ENCODE measurements at regions of chr3 and their contacts with region 1.

Region 1: DNA sequence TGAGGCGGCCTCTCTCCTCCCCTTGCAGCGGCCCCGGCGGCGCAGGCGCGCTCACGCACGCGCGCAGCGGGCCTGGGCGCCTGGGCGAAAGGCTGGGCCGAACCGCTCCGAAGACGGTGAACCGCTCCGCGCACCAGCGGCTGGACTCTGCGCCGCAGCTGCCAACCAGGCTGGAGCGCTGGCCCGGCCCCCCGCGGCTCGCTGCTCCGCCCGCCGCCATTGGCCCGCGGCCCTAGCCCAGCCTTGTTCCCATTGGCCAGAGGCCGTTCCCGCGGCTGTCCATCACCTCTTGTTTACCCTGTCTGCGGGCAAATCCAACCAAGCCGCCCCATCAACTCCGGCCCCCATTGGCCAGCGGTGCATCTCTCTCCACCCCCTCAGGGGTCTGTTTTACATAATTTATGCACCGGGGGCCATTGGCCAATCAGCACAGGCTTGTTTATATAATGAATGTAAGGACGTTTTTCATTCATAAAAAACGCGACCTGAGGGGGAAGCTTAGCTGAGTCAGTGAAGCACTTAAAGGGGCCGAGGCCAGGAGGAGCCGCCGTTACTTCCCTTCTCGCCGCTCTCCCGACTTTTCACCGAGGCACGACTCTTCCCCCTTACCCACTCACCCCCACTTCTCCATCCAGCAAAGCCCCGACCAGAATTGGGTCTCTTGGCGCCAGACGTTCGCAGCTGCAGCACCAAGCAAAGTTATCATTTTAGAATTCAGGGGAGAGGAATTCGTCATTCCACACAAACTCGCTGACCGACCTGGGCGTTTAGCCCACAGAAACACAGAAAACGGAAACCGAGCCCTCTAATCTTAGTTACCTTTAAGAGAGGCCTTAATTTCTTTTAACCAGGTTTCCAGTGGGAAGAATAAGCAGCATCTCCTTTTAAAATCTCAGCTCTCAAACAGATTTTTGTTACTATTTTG is at the start of gene ETV5:
- DNase-seq: peak; percentile 97
- H3K4me3 Mint-ChIP-seq: peak within 1 kb of the TSS; percentile 78
- H3K27ac Mint-ChIP-seq: no peak within 1 kb of the TSS
- H3K4me1 Mint-ChIP-seq: peaks cover 30% of the 10 kb centered on the region
- H3K27me3 Mint-ChIP-seq: peaks cover 79% of the 10 kb centered on the region
- total RNA-seq, gene ETV5: 1.1 to 1.5 TPM

Region 2: GRCh38 chr3:185585859-185586685 is 523.1 kb before region 1 on chr3 and contains the start of gene SENP2:
- CTCF ChIA-PET with region 1: no interaction called
- intact Hi-C with region 1: loop called (anchors 2 kb)
- DNase-seq: peak; percentile 100
- H3K4me3 Mint-ChIP-seq: peak within 1 kb of the TSS; percentile 83
- H3K27ac Mint-ChIP-seq: peak within 1 kb of the TSS; percentile 88
- H3K4me1 Mint-ChIP-seq: peaks cover 27% of the 10 kb centered on the region
- H3K27me3 Mint-ChIP-seq: no peaks in the 10 kb centered on the region
- total RNA-seq, gene SENP2: 19.4 to 25.0 TPM

Region 3: GRCh38 chr3:185976977-185977678 is 132.1 kb before region 1 on chr3:
- CTCF ChIA-PET with region 1: interaction called, 4 read pairs
- intact Hi-C with region 1: loop called (anchors 5 kb)
- DNase-seq: peak; percentile 94
- H3K4me3 Mint-ChIP-seq: no peak overlapping the region
- H3K27ac Mint-ChIP-seq: no peak overlapping the region
- H3K4me1 Mint-ChIP-seq: peaks cover 9% of the 10 kb centered on the region
- H3K27me3 Mint-ChIP-seq: no peaks in the 10 kb centered on the region

Region 4: DNA sequence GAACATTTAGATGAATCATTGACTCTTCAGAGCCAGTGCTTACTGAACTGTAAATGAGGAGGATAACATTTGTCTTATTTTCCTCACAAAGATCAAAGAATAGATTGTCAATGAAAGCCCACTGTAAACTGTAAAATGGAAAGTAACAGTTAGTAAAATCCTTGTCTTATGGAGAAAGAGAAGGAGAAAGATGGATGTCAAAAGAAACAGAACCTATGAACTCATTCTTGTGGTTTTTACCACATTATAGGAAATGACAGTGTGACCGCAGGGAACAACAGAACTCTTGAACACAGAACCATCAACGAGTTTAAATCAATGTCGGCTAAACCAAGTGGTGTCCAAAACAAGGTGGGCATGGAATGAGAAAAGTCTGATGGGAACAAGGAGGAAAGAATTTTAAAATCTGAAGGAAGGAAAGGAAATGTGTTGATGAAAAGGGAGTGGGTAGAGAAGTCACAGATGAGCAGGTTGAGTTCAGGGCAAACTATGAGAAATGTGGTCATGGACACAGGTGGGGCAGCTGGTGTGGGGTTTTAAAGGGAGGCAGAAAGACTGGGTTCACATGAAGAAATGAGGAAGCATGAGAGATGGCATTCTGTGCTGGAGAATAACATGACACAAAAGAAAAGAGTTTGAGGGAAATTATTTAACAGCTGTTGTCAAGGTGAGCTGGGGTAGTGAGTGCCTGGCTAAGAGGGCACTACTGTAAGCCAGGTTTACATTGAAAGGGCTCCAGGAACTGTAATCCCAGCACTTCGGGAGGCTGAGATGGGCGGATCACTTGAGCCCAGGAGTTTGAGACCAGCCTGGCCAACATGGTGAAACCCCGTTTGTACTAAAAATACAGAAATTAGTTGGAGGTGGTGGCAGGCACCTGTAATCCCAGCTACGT is 42.1 kb after region 1 on chr3:
- CTCF ChIA-PET with region 1: no interaction called
- intact Hi-C with region 1: loop called (anchors 1 kb)
- DNase-seq: peak; percentile 10
- H3K4me3 Mint-ChIP-seq: no peak overlapping the region
- H3K27ac Mint-ChIP-seq: peak overlapping the region; percentile 18
- H3K4me1 Mint-ChIP-seq: peaks cover 13% of the 10 kb centered on the region
- H3K27me3 Mint-ChIP-seq: peaks cover 48% of the 10 kb centered on the region

Region 5: DNA sequence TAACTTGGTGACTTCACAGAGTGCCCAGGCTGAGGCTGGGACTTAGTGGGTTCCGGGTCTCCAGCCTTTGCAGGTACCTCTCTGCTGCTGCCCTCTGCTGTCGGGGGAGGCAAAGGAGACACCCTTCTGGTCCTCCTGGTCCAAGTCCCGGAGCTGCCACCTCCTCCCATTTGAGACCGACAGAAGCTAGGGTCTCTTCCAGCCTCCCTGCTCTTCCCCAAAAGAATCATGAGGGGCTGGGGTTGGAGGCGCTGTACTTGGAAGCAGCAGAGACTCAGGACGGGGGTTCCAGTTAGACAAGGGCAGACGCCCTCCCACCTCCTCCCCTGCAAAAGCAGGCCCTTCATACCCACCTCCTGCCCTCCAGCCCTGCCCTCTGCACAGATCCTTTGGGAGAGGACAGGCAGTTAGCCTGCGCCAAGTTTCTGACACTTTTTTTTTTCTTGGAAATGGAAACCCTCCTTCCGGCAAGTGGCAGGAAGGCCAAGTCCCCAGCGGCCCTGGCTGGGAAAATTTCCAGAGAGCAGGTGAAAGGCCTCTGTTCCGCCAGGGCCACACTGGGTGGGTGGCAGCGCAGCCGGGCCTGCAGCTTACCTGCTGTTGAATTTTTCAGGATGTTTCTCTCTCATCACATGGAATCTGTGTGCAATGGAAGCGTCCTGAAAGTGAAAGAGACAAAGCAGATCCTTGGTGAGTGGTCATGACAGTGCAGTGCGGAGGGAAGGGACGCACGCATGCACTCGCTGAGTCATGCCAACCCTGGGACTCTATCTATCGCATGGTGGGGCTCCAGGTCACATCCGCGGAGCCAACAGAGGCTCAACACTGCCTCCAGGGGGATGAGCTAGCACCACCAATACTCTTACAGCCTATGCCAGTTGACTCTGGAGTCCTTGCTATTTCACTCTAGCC is 133.0 kb after region 1 on chr3:
- CTCF ChIA-PET with region 1: interaction called, 3 read pairs
- intact Hi-C with region 1: loop called (anchors 2 kb)
- DNase-seq: peak; percentile 87
- H3K4me3 Mint-ChIP-seq: peak overlapping the region; percentile 17
- H3K27ac Mint-ChIP-seq: no peak overlapping the region
- H3K4me1 Mint-ChIP-seq: peaks cover 7% of the 10 kb centered on the region
- H3K27me3 Mint-ChIP-seq: peaks cover 7% of the 10 kb centered on the region

Region 6: DNA sequence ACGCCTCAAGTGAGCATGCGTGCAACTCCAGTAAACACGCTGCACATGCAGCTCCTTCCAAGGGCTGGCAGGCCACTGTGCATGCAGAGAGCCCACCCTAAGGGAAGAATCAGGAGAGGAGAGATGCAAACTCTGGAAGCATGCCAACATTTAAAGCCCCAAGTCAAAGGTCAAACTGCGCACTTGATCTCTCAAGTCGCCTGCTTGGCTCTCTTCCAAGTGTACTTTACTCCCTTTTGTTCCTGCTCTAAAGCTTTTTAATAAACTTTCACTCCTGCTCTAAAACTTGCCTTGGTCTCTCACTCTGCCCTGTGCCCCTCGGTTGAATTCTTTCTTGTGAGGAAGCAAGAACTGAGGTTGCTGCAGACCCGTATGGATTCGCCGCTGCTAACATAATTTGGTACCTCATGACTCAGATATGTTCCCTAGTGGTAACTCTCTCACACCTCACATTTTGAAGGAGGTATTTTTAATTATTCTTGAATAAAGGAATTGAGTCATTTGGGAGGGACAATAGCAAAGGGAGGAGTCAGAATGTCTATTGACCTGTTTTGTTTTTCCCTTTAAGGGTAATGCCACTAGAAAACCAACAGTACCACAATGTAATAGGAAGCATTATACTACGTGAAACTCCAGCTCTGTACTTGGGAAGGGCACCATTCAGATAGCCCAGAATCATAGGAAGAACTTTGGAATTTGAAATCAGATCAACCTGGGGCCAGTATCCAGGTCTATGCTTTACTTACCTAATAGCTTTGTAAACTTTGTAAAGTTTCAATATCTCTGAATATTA is 272.4 kb after region 1 on chr3:
- CTCF ChIA-PET with region 1: no interaction called
- intact Hi-C with region 1: no loop called
- DNase-seq: no peak
- H3K4me3 Mint-ChIP-seq: no peak overlapping the region
- H3K27ac Mint-ChIP-seq: no peak overlapping the region
- H3K4me1 Mint-ChIP-seq: peaks cover 6% of the 10 kb centered on the region
- H3K27me3 Mint-ChIP-seq: peaks cover 3% of the 10 kb centered on the region

Region 7: GRCh38 chr3:186534113-186534669 is 425.0 kb after region 1 on chr3:
- CTCF ChIA-PET with region 1: no interaction called
- intact Hi-C with region 1: loop called (anchors 2 kb)
- DNase-seq: peak; percentile 76
- H3K4me3 Mint-ChIP-seq: peak overlapping the region; percentile 61
- H3K27ac Mint-ChIP-seq: peak overlapping the region; percentile 97
- H3K4me1 Mint-ChIP-seq: peaks cover 94% of the 10 kb centered on the region
- H3K27me3 Mint-ChIP-seq: no peaks in the 10 kb centered on the region

Region 8: DNA sequence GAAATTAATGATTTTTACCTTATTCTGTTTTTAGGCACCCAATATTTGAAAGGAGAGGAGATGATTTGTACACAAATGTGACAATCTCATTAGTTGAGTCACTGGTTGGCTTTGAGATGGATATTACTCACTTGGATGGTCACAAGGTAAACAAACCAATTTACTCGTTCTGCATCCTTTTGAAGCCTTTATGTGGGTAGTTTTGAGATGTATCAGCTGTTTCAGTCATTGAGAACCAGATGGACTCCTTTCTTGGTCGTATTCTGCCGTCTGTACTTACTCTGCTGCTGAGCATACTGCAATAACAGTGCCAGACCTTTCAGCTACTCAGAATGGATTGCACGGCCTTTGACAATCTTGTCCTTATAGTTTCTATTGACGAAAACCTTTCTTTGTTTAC is 474.6 kb after region 1 on chr3:
- CTCF ChIA-PET with region 1: no interaction called
- intact Hi-C with region 1: no loop called
- DNase-seq: no peak
- H3K4me3 Mint-ChIP-seq: no peak overlapping the region
- H3K27ac Mint-ChIP-seq: no peak overlapping the region
- H3K4me1 Mint-ChIP-seq: peaks cover 6% of the 10 kb centered on the region
- H3K27me3 Mint-ChIP-seq: no peaks in the 10 kb centered on the region

Region 9: GRCh38 chr3:186882881-186883685 is 773.9 kb after region 1 on chr3:
- CTCF ChIA-PET with region 1: no interaction called
- intact Hi-C with region 1: no loop called
- DNase-seq: peak; percentile 74
- H3K4me3 Mint-ChIP-seq: peak overlapping the region; percentile 14
- H3K27ac Mint-ChIP-seq: peak overlapping the region; percentile 72
- H3K4me1 Mint-ChIP-seq: peaks cover 56% of the 10 kb centered on the region
- H3K27me3 Mint-ChIP-seq: no peaks in the 10 kb centered on the region

Measured in activated naive CD4-positive, alpha-beta T cell treated with anti-CD3 and anti-CD28 coated beads for 36 hours (primary cell).